Calu3 (cell line): ENCODE measurements at regions of chr19 and their contacts with region 1.

Region 1: GRCh38 chr19:41746593-41747227 is 8.6 kb upstream of the CEACAM6 start:
- DNase-seq: peak; percentile 72
- H3K4me3 Mint-ChIP-seq: no peak overlapping the region
- H3K27ac Mint-ChIP-seq: no peak overlapping the region
- H3K4me1 Mint-ChIP-seq: peaks cover 22% of the 10 kb centered on the region
- H3K27me3 Mint-ChIP-seq: peaks cover 40% of the 10 kb centered on the region
- CTCF ChIP-seq: peak; percentile 65

Region 2: GRCh38 chr19:41587101-41587837 is 159.4 kb before region 1 on chr19:
- CTCF ChIA-PET with region 1: no interaction called
- intact Hi-C with region 1: no loop called
- DNase-seq: no peak
- H3K4me3 Mint-ChIP-seq: no peak overlapping the region
- H3K27ac Mint-ChIP-seq: no peak overlapping the region
- H3K4me1 Mint-ChIP-seq: no peaks in the 10 kb centered on the region
- H3K27me3 Mint-ChIP-seq: peaks cover 95% of the 10 kb centered on the region
- CTCF ChIP-seq: no peak

Region 3: GRCh38 chr19:41597600-41598041 is 149.1 kb before region 1 on chr19:
- CTCF ChIA-PET with region 1: no interaction called
- intact Hi-C with region 1: loop called (anchors 5 kb)
- DNase-seq: peak; percentile 75
- H3K4me3 Mint-ChIP-seq: no peak overlapping the region
- H3K27ac Mint-ChIP-seq: no peak overlapping the region
- H3K4me1 Mint-ChIP-seq: peaks cover 18% of the 10 kb centered on the region
- H3K27me3 Mint-ChIP-seq: peaks cover 97% of the 10 kb centered on the region
- CTCF ChIP-seq: peak; percentile 93

Region 4: DNA sequence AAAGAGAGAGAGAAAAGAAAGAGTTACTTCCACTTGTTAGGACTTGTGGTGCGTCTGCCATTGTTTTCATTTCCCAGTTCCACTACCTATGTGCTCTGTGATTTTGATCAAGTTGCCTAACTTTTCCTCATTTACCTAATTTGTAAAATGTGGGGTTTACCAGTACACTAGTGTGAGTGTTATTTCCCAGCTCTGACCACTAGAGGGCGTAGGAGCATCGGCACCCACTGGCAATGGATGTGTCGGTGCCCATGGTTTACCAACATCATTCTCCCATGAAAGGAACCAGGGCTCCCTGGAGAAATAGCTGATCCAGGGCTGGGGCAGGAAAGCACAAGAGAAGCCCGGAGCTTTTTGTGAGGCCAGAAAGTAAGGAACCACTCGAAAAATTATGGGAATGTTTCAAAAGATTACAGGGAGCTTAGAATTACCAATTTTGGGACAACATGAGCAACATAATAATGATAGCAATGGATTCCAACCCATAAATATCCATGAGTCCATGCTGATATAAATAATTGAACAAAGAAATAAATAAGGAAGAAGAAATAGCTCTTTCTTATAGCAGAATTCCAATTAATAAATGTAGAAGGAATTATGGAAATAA is 104.7 kb before region 1 on chr19:
- CTCF ChIA-PET with region 1: no interaction called
- intact Hi-C with region 1: loop called (anchors 5 kb)
- DNase-seq: peak; percentile 88
- H3K4me3 Mint-ChIP-seq: no peak overlapping the region
- H3K27ac Mint-ChIP-seq: no peak overlapping the region
- H3K4me1 Mint-ChIP-seq: no peaks in the 10 kb centered on the region
- H3K27me3 Mint-ChIP-seq: peaks cover 61% of the 10 kb centered on the region
- CTCF ChIP-seq: peak; percentile 95

Region 5: GRCh38 chr19:41696402-41697197 is 50.1 kb before region 1 on chr19:
- CTCF ChIA-PET with region 1: no interaction called
- intact Hi-C with region 1: loop called (anchors 2 kb)
- DNase-seq: peak; percentile 46
- H3K4me3 Mint-ChIP-seq: no peak overlapping the region
- H3K27ac Mint-ChIP-seq: no peak overlapping the region
- H3K4me1 Mint-ChIP-seq: peaks cover 30% of the 10 kb centered on the region
- H3K27me3 Mint-ChIP-seq: peaks cover 18% of the 10 kb centered on the region
- CTCF ChIP-seq: no peak